AG04449 (cell line): ENCODE measurements at regions of chr3 and their contacts with region 1.

Region 1: DNA sequence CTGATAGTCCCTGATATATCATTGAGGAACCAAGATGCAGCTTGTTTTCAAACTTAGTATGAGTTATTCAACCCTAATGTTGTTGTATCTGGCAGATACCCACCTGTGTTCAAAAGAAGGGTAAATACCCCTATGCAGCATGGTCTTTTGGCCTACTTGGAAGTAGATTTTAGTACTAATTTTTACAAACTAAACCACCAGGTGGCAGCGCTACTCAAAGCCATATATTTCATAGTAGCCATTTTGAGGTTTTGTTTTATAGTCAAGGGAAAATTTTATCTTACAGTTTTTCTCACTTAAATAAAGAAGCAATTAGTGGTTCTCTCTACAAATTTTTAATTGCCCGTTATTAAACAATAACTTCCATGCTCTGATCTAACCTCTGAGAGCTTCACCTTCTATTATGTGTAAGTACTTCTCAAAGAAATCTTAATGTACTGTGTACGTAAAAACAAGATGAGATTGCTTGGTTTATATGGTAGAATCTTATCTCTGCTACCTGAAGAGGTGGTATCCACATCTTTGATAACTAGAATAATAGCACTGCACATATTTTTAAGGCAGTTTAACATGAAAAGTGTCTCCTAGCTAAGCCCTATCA is 31.5 kb upstream of the MLF1 start:
- DNase-seq: no peak
- H3K4me3 ChIP-seq: no peak overlapping the region
- CTCF ChIP-seq: peak; percentile 52

Region 2: GRCh38 chr3:157532529-157533297 is 1006.8 kb before region 1 on chr3:
- CTCF ChIA-PET with region 1: interaction called, 10 read pairs
- POLR2A ChIA-PET with region 1: no interaction called
- DNase-seq: peak; percentile 71
- H3K4me3 ChIP-seq: peak overlapping the region; percentile 44
- CTCF ChIP-seq: peak; percentile 59

Region 3: DNA sequence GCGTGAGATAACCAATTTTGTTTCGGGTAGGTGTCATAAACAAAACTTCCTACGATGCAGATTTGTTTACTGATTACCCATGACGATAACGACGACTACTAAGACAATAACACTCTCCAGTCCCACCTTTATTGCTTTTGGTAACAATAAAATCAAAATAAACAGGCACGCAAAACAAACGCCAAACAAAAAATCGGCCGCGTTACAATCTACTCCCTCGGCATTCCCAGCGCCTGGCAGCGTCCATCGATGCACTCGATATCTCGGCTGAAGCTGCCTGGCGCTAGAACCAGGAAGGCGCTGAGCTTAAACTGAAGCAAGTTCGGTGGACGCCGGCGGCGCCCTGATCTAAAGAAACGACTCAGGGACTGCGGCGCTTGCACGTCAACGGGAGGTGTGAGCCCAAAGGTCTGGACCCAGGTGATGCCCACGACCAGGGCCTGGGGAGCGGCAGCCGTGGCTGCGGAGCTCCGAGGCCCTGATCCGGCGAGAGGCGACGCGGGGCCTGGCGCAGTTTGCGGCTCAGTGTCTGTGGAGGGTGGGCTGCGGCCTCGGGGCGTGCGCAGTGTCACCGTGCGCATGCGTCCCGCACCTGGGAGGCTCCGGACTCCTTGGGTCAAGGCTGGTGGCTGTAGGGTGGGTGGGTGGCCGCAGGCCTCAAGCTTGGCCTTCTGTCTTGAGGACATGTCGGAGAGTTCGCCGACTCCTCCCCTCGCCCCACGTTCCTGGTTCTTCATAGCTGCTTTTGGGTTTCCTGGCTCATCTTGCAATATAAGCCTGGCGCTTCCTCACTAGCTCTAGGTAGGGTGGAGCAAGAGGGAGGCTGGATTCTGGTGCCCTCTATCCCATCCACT is 429.5 kb before region 1 on chr3 and contains the start of gene RSRC1:
- CTCF ChIA-PET with region 1: no interaction called
- POLR2A ChIA-PET with region 1: no interaction called
- DNase-seq: peak; percentile 65
- H3K4me3 ChIP-seq: peak within 1 kb of the TSS; percentile 92
- CTCF ChIP-seq: no peak

Region 4: DNA sequence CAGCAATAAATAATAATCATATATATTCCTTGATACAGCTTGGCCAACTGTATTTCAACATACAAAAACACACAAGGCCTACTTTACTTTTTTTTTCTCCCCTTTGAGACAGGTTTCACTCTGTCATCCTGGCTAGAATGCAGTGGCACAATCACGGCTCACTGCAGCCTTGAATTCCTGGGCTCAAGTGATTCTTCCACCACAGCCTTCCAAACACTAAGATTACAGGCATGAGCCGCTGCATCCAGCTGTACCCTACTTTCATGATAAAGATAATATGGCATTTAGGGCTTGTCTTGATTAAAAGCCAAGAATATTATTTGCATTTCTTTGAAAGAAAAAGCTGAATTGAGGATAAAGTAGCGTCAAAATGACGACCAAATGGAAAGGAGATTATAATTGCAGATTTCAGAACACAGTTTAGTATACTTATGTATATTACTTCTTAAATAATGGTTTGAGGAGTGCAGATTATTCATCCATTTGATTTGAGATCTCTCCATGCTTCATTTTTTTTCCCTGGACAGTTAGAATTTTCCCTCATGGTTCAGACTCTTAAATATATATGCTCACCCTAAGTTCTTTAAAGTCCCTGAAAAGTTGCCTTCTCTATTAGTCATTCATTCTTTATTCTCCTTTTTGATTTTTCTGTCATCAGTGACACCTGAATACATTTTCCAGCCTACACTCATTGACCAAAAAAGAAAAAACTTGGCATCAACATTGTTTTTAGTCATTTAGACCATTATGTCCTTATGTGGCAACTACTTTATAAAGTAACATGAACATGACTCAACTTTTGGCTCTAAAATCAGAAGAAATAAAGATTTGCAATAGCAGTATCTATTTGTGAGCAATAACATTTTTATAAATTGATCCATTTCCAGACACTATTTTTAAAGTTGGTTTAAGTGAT is 17.0 kb before region 1 on chr3:
- CTCF ChIA-PET with region 1: interaction called, 55 read pairs
- POLR2A ChIA-PET with region 1: no interaction called
- DNase-seq: peak; percentile 34
- H3K4me3 ChIP-seq: no peak overlapping the region
- CTCF ChIP-seq: no peak

Region 5: GRCh38 chr3:158570999-158571974 is 31.8 kb after region 1 on chr3 and contains the start of gene MLF1:
- CTCF ChIA-PET with region 1: interaction called, 29 read pairs
- POLR2A ChIA-PET with region 1: no interaction called
- DNase-seq: peak; percentile 62
- H3K4me3 ChIP-seq: peak within 1 kb of the TSS; percentile 76
- CTCF ChIP-seq: no peak

Region 6: GRCh38 chr3:158644345-158644908 is 104.9 kb after region 1 on chr3 and contains the start of gene GFM1:
- CTCF ChIA-PET with region 1: interaction called, 28 read pairs
- POLR2A ChIA-PET with region 1: no interaction called
- DNase-seq: peak; percentile 75
- H3K4me3 ChIP-seq: peak within 1 kb of the TSS; percentile 95
- CTCF ChIP-seq: peak; percentile 94

Region 7: GRCh38 chr3:158801696-158802408 is 262.3 kb after region 1 on chr3 and contains the start of gene MFSD1:
- CTCF ChIA-PET with region 1: interaction called, 11 read pairs
- POLR2A ChIA-PET with region 1: no interaction called
- DNase-seq: peak; percentile 44
- H3K4me3 ChIP-seq: peak within 1 kb of the TSS; percentile 83
- CTCF ChIP-seq: no peak